Sigmoid colon (tissue), 7 donors: ENCODE measurements at regions of chr2 and their contacts with region 1.

Region 1: DNA sequence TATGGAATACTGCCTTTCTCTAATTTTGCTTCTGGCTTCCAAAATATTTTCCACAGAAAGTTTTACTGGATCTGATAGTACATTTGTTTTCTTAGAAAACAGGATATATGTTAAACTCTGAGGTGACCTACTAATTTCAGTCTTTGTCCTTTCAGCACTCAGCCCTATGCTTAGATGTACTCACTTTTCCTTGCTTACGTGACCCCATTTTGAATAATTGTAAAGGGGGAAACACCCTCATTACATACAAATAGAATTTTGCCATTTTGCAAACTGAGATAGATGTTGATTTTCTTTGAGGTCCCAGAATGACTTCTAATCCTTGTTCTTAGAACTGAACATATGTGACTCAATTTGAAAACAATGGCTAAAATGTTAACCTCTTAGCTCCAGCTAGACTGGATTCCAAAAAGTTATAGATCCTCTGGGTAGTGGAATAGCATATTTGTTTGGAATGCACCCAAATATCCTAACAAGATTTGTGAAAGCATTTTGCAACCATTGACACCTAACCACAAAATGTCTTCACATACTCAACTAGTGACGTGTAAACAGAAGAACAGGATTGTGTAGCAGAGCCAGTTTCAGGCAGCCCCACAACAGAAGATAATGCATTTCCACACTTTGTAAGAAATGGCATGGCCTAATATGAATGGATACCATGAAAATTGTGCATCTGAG is 44.8 kb upstream of the EHBP1 start:
- DNase-seq: no peak
- H3K4me3 ChIP-seq: no peak overlapping the region
- H3K27ac ChIP-seq: peak overlapping the region; percentile 41 to 85 (median 82)
- H3K4me1 ChIP-seq: peaks cover 0 to 72% (median 60%) of the 10 kb centered on the region in 4 donors
- H3K27me3 ChIP-seq: no peaks in the 10 kb centered on the region
- CTCF ChIP-seq: no peak
- EP300 ChIP-seq: no peak
- POLR2A ChIP-seq: no peak

Region 2: GRCh38 chr2:62505750-62506420 is 154.8 kb before region 1 on chr2 and contains the start of gene TMEM17:
- intact Hi-C with region 1: loop called (anchors 10 kb)
- DNase-seq: peak; percentile 97
- H3K4me3 ChIP-seq: peak within 1 kb of the TSS; percentile 44 to 71 (median 66)
- H3K27ac ChIP-seq: peak within 1 kb of the TSS; percentile 89 to 92 (median 90)
- H3K4me1 ChIP-seq: peaks cover 0 to 15% (median 7%) of the 10 kb centered on the region in 4 donors
- H3K27me3 ChIP-seq: no peaks in the 10 kb centered on the region
- CTCF ChIP-seq: no peak
- EP300 ChIP-seq: peak in 1 of 4 donors; percentile 34
- POLR2A ChIP-seq: no peak
- total RNA-seq, gene TMEM17: 1.5 to 3.4 (median 2.1) TPM

Region 3: GRCh38 chr2:62713837-62714236 is 53.1 kb after region 1 on chr2:
- intact Hi-C with region 1: no loop called
- DNase-seq: no peak
- H3K4me3 ChIP-seq: no peak overlapping the region
- H3K27ac ChIP-seq: peak overlapping the region in 1 of 4 donors; percentile 11
- H3K4me1 ChIP-seq: peaks cover 0 to 89% (median 38%) of the 10 kb centered on the region in 4 donors
- H3K27me3 ChIP-seq: no peaks in the 10 kb centered on the region
- CTCF ChIP-seq: no peak
- EP300 ChIP-seq: no peak
- POLR2A ChIP-seq: no peak